Mammary epithelial cell (primary cell): ENCODE measurements at regions of chr6 and their contacts with region 1.

Region 1: DNA sequence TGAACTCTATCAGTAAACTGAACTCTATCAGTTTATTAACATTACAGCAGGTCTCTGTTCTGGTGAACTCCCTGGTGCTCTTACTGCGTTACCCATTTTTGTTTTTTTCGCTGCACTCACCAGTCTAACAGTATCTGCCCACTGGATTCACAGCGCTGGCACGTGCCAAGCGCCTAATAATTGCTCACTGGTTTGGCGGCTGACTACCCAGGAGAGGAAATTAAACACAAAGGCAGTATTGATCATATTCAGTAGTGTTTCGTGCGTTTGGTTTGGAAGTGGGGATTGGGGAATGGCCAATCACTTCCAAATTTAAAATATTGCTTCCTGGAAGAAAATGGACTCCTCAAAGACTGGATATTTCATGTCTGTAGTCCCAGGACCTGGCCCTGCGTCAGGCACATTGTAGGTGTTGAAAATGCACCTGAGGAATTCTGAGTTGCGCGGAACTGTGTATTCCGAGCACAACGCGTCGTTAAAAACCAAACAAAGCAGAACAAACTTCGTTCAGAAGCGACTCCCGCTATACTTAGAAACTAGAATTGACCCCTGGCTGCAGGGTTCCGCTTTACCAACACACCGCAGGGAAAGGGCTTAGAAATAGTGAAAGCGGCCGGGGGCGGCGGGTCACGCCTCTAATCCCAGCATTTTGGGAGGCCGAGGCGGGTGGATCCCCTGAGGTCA is 1.1 kb upstream of the RPS12 start:
- DNase-seq: peak; percentile 55
- H3K4me3 ChIP-seq: peak overlapping the region; percentile 66 to 88 (median 87)
- H3K27ac ChIP-seq: peak overlapping the region; percentile 83
- H3K4me1 ChIP-seq: peaks cover 22% of the 10 kb centered on the region
- H3K27me3 ChIP-seq: peaks cover 3% of the 10 kb centered on the region
- CTCF ChIP-seq: no peak

Region 2: DNA sequence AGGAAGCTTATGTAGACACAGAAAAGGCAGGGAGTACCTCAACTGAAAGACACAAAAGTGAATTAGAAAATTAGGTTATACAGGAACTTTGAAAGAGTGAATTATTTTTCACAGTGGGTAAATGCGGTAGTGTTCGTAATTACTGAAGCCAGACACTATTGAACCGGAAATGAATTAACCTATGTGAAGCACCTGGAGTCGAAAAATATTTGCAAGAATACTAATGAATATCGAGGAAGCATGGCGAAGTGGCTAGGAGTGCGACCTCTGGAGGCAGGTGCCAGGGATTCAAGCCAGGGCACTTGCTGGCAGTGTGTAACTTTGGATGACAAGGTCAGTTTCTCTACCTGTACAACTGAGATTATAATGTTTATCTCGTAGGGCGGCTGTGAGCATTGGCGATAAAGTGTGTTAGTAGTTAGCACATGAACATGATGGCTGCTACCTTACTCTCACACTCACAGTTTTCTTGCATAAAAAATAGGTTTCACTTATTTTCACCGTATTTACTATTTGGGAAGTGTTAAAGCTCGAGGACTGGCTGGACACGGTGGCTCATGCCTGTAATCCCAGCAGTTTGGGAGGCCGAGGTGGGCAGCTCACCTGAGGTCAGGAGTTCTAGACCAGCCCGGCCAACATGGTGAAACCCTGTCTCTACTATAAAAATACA is 14.3 kb before region 1 on chr6:
- CTCF ChIA-PET with region 1: no interaction called
- dilution Hi-C with region 1: no loop called
- in situ Hi-C with region 1: no loop called
- intact Hi-C with region 1: loop called (anchors 1 kb)
- DNase-seq: peak; percentile 72
- H3K4me3 ChIP-seq: peak overlapping the region; percentile 77 to 92 (median 91)
- H3K27ac ChIP-seq: no peak overlapping the region
- H3K4me1 ChIP-seq: no peaks in the 10 kb centered on the region
- H3K27me3 ChIP-seq: no peaks in the 10 kb centered on the region
- CTCF ChIP-seq: peak; percentile 89 to 95

Region 3: DNA sequence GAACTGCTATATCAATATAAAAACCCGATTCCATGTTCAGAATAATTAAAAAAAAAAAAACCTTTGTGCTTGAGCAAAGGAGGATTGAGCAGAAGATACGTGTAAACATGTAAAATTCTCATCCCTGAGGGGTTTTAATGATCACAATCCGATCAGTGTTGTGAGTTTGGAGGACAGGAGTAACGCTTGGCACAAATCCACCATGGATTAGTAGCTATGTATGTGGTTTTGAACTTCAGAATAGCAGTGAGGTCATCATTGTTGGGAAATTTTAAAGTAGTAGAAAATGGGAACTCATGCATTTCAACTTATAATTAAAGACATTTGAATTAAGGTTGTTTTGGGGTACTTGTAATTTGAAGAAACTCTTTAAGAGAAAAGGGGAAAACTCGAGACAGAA is 204.3 kb after region 1 on chr6:
- CTCF ChIA-PET with region 1: no interaction called
- dilution Hi-C with region 1: no loop called
- in situ Hi-C with region 1: no loop called
- intact Hi-C with region 1: no loop called
- DNase-seq: peak; percentile 16
- H3K4me3 ChIP-seq: no peak overlapping the region
- H3K27ac ChIP-seq: no peak overlapping the region
- H3K4me1 ChIP-seq: no peaks in the 10 kb centered on the region
- H3K27me3 ChIP-seq: no peaks in the 10 kb centered on the region
- CTCF ChIP-seq: no peak

Region 4: DNA sequence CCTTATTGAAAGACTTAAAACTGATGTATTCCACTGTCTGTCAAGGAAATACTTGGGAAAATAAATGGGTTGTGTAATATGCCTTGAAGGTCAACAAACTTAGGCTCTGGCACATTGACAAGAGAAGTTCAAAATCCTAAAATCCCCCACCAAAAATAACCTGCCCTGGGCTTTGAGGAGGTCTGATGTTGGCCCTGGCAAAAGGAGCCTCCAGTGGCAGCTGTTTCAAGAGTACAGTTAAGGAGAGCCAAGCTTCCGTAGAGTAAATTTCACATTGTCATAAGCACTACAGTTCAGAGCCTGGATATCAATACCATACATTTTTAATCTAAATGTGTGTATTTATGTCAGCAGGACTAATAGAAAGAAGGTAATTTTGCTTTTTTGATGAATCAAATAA is 710.5 kb after region 1 on chr6:
- CTCF ChIA-PET with region 1: no interaction called
- dilution Hi-C with region 1: no loop called
- in situ Hi-C with region 1: no loop called
- intact Hi-C with region 1: no loop called
- DNase-seq: no peak
- H3K4me3 ChIP-seq: no peak overlapping the region
- H3K27ac ChIP-seq: no peak overlapping the region
- H3K4me1 ChIP-seq: no peaks in the 10 kb centered on the region
- H3K27me3 ChIP-seq: peaks cover 6% of the 10 kb centered on the region
- CTCF ChIP-seq: no peak